Colonic mucosa (tissue), 4 donors: ENCODE measurements at regions of chr15 and their contacts with region 1.

Region 1: DNA sequence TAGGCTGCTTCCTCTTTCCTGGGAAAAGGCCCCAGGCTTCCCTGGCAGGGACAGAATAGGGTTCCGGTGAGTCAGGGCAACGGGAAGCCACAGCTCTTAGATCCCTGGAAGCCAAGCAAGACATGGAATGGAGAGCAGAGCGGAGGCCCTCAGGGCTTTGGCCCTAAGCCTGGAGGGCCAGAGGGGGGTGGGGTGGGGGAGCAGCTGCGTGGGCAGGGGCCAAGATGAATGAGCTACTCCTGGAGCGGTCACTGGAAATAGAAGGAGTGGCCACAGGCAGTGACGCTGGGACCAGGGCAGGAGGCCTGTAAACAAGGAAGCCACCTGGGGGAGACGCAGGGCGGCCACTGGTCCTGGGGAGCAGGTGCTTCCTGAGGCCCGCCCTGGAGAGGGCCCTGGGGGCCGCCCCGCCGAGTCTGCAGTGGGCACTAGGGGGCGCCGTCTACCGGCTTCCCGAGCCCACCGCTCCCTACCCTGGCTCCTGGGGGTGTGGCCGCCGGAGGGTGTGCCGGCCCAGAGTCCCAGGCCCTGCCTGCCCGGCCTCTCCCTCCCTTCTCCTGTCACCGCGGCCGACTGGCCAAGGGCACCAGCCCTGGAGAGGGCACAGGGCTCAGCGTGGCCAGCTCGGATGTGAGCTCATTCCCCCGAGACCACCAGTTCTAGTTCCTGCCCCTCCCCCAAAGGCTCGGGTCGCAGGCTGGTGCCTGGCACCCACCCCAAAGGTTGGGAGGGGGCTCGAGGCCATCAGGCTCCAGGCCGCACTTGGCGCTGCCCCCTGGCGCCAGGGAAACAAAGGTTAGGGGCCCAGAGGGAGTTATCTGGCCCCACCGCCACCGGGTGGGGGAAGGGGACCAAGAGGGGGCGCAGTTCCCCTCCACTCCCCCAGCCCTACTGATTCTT is 12.1 kb downstream of the VPS18 start:
- DNase-seq: peak; percentile 95
- H3K4me3 ChIP-seq: peak overlapping the region; percentile 22
- H3K27ac ChIP-seq: peak overlapping the region; percentile 79
- H3K4me1 ChIP-seq: peaks cover 18% of the 10 kb centered on the region
- H3K27me3 ChIP-seq: no peaks in the 10 kb centered on the region
- CTCF ChIP-seq: peak; percentile 93

Region 2: DNA sequence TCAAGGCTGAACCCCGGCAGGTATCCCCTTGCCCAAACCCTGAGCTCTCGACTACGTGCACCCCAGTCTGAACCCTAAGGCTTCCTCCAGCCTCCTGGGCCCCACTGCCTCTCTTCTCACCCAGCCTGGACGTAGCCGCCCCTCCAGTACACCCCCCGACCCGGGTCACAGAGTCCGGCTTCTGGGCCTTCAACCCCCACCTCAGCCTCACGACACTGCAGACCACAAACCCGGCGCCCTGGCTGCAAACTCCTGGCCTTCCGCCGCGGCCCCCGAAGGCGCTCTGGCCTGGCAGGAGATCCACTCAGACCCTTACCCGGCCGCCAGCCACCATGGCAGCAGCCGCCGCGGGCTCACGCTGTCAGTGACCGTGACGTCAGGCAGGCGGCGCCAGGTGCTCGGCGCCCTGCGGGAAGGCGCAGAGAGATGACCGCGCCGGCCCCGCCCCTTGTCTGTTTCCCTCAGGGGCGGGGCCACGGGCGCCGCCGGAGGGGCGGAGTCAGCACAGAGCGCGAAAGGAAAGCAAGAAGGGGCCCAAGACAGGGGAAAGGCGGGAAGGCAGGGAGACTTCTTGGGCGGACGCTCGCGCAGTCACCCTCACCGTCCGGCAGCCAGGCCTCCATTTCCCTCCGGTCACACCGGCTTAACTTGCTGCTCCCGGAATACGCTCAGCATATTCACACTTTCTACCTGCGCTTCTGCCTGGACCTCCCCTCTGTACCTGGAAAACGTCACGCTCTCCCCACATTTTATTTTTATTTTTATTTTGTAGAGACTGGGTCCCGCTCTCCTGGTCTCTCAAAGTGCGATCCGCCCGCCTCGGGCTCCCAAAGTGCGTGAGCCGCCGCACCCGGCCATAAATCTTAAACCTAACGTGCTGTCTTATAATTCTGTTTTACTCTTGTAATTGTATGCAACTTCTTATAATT is 151.2 kb before region 1 on chr15 and contains the start of gene RMDN3:
- intact Hi-C with region 1: no loop called
- DNase-seq: peak; percentile 95
- H3K4me3 ChIP-seq: peak within 1 kb of the TSS; percentile 97
- H3K27ac ChIP-seq: peak within 1 kb of the TSS; percentile 80
- H3K4me1 ChIP-seq: no peaks in the 10 kb centered on the region
- H3K27me3 ChIP-seq: no peaks in the 10 kb centered on the region
- CTCF ChIP-seq: no peak
- total RNA-seq, gene RMDN3: 31.1 to 49.1 TPM

Region 3: DNA sequence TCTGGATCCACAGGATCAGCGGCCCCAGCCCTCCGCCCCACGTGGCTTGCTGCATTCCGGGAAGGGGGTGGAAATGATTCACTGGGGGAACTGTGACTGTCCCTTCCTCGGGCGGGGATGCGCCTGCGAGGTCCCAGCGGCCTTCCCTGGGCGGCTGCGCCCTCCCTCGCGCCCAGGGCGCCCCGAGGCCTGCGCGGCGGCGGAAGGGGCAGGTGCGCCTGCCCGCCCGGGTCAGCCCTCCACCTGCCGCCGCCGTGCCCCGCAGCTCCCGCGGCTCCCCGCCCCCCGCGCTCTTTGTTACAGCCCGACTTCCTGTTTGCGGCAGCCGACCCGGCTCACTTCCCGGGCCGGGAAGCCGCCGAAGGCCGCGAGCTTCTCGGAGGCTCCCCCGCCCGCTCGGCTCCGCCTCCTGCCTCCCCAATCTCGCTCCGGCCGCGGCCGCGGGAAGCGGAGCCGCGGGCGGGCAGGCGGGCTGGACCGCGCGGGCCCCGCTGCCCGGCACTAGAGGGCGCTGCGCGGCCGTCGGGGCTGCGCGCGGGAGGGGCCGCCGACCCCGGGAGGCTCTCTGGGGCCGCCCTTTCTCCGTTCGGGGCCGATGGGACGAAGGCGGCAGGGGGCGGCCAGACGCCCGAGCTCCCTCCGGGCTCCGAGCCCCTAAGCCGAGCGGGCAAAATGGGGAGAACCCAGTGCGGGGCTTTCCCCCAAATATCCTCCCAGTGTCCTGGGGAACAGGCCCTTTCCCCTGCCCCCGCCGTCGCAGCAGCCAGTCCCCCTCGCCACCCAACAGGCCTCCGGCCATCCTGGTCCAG is 35.4 kb after region 1 on chr15:
- intact Hi-C with region 1: loop called (anchors 5 kb)
- DNase-seq: peak; percentile 81
- H3K4me3 ChIP-seq: peak overlapping the region; percentile 53
- H3K27ac ChIP-seq: peak overlapping the region; percentile 77
- H3K4me1 ChIP-seq: no peaks in the 10 kb centered on the region
- H3K27me3 ChIP-seq: no peaks in the 10 kb centered on the region
- CTCF ChIP-seq: no peak

Region 4: DNA sequence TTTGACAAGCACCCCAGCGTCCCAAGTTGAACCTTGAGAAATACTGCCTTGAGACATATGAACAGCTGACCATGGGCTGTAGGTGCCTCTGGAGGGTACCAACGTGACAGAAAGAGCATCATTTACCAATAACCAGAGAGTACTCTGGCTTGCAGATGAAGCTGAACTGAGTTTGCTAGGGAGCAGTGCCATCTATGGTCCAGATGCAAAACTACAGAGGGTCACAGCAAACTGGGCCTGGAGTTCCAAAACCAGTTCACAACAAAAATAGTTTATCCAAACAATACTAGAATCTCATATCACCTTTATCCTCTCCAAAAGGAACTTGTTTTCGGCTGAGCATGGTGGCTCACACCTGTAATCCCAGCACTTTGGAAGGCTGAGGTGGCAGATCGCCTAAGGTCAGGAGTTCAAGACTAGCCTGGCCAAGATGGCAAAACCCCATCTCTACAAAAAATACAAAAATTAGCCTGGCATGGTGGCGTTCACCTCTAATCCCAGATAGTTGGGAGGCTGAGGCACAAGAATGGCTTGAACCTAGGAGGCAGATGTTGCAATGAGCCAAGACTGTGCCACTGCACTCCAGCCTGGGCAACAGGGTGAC is 116.2 kb after region 1 on chr15:
- intact Hi-C with region 1: loop called (anchors 2 kb)
- DNase-seq: peak; percentile 43
- H3K4me3 ChIP-seq: no peak overlapping the region
- H3K27ac ChIP-seq: no peak overlapping the region
- H3K4me1 ChIP-seq: no peaks in the 10 kb centered on the region
- H3K27me3 ChIP-seq: no peaks in the 10 kb centered on the region
- CTCF ChIP-seq: peak; percentile 60

Region 5: GRCh38 chr15:41180206-41180789 is 274.0 kb after region 1 on chr15:
- intact Hi-C with region 1: loop called (anchors 5 kb)
- DNase-seq: no peak
- H3K4me3 ChIP-seq: no peak overlapping the region
- H3K27ac ChIP-seq: no peak overlapping the region
- H3K4me1 ChIP-seq: no peaks in the 10 kb centered on the region
- H3K27me3 ChIP-seq: no peaks in the 10 kb centered on the region
- CTCF ChIP-seq: no peak